ENCODE measurements at regions of chr5 and their contacts with region 1.

Region 1: DNA sequence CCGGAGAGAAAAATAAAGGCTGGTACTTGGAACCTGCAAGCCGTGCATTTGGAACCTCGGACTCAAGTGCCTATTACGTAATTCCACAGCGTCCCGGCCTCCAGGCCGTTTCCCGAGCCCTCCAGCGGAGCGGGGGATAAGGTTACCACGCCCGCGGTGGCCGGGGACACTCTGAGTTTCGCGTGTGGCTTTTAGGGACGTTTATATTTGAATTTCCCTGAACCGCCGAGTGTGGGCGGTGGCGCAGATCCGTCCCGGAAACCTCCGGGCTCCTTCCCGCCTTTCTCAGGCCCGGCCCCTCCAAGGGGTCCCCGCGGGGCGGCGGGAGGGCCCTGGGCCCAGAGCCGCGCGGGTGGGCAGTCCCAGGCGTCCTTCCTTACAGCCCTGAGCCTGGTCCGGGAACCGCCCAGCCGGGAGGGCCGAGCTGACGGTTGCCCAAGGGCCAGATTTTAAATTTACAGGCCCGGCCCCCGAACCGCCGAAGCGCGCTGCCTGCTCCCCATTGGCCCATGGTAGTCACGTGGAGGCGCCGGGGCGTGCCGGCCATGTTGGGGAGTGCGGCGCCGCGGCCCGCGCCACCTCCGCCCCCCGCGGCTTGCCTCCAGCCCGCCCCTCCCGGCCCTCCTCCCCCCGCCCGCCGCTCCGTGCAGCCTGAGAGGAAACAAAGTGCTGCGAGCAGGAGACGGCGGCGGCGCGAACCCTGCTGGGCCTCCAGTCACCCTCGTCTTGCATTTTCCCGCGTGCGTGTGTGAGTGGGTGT is at the start of gene LMNB1:
- DNase-seq: peak; percentile 91 to 95
- H3K4me3 ChIP-seq: peak within 1 kb of the TSS; percentile 63 to 90
- H3K27ac ChIP-seq: peak within 1 kb of the TSS; percentile 79 to 90
- H3K4me1 ChIP-seq: peaks cover 0 to 19% (median 11%) of the 10 kb centered on the region in 4 donors
- H3K27me3 ChIP-seq: no peaks in the 10 kb centered on the region
- CTCF ChIP-seq: peak in 1 of 2 experiments; percentile 13

Region 2: DNA sequence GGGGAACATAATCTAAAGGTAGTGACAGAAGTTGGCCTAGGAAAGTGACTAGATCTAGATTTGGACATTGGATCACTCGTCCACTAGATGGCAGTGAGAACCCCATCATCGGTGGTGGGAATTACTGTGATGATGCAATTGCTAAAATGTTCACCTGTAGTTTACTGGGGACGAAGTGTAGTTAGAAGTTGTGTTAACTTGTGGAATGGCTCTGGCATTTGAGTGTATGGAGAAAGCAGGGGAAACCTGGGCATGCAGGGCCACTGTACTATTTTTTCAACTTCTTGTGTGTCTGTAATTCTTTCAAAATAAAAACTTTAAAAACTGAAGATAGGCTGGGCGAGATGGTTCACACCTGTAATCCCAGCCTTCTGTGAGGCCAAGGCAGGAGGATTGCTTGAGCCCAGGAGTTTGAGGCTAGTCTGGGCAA is 100.5 kb before region 1 on chr5:
- intact Hi-C with region 1: loop called (anchors 2 kb)
- DNase-seq: peak in 1 of 2 donors; percentile 31
- H3K4me3 ChIP-seq: no peak overlapping the region
- H3K27ac ChIP-seq: no peak overlapping the region
- H3K4me1 ChIP-seq: no peaks in the 10 kb centered on the region
- H3K27me3 ChIP-seq: no peaks in the 10 kb centered on the region
- CTCF ChIP-seq: peak; percentile 71 to 76

Region 3: DNA sequence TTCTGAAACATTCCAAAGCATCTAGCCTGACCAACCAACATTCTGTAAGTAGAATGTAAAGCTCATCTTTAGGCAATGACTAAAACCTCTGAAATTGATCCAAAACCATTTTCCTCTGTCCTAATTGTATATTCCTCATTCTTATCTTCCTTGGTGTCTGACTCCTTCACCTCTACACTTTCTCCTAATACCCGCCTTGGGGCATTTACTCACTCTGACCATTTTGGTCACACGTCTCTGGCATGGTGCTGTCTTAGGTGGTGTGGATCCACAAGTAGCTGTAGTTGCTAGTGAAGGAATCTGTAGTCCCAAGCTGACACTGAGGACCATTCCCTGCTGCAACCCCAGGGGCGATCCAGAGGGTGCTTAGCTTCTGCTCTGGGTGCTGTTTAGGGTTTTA is 40.5 kb before region 1 on chr5:
- intact Hi-C with region 1: no loop called
- DNase-seq: no peak
- H3K4me3 ChIP-seq: no peak overlapping the region
- H3K27ac ChIP-seq: no peak overlapping the region
- H3K4me1 ChIP-seq: no peaks in the 10 kb centered on the region
- H3K27me3 ChIP-seq: no peaks in the 10 kb centered on the region
- CTCF ChIP-seq: no peak

Region 4: DNA sequence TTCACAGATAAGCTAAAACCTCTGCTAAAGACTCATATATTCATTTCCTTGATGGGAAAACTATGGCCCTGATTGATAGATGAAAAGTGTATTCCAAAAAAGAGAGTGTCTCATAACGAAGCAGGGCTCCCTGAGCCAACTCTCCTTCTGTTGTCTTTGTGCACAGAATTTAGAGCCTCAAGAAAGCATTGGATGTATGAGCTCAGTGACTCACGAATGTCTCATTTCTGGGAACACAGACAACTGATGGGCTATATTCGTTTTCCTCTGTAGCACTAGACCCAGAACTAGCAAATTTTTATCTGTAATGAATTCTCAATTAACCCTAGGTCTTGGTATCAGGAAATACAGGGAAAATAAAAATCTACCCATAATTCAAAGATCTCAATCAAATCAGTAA is 88.6 kb after region 1 on chr5:
- intact Hi-C with region 1: no loop called
- DNase-seq: no peak
- H3K4me3 ChIP-seq: no peak overlapping the region
- H3K27ac ChIP-seq: no peak overlapping the region
- H3K4me1 ChIP-seq: peaks cover 0 to 8% (median 6%) of the 10 kb centered on the region in 4 donors
- H3K27me3 ChIP-seq: no peaks in the 10 kb centered on the region
- CTCF ChIP-seq: no peak

Region 5: GRCh38 chr5:127030259-127031146 is 253.8 kb after region 1 on chr5 and contains the start of gene MARCHF3:
- intact Hi-C with region 1: loop called (anchors 10 kb)
- DNase-seq: peak; percentile 93 to 98
- H3K4me3 ChIP-seq: peak within 1 kb of the TSS; percentile 71 to 83
- H3K27ac ChIP-seq: peak within 1 kb of the TSS; percentile 87 to 90
- H3K4me1 ChIP-seq: peaks cover 0 to 14% (median 4%) of the 10 kb centered on the region in 4 donors
- H3K27me3 ChIP-seq: no peaks in the 10 kb centered on the region
- CTCF ChIP-seq: peak; percentile 12 to 28